Natural killer cell (primary cell): ENCODE measurements at regions of chr1 and their contacts with region 1.

Region 1: GRCh38 chr1:205284343-205285144 is 37.0 kb downstream of the NUAK2 start:
- DNase-seq: peak; percentile 81 to 94
- ATAC-seq: peak; percentile 63 to 77 (median 66)
- H3K4me3 ChIP-seq: peak overlapping the region; percentile 26
- H3K4me3 Mint-ChIP-seq: peak overlapping the region; percentile 91
- H3K27ac ChIP-seq: peak overlapping the region; percentile 82
- H3K27ac Mint-ChIP-seq: peak overlapping the region; percentile 83 to 99
- H3K4me1 ChIP-seq: peaks cover 83% of the 10 kb centered on the region
- H3K4me1 Mint-ChIP-seq: peaks cover 73 to 82% of the 10 kb centered on the region in 2 donors
- H3K27me3 ChIP-seq: no peaks in the 10 kb centered on the region
- H3K27me3 Mint-ChIP-seq: no peaks in the 10 kb centered on the region
- CTCF ChIP-seq: no peak

Region 2: GRCh38 chr1:203326830-203327683 is 1957.5 kb before region 1 on chr1:
- intact Hi-C with region 1: loop called (anchors 10 kb)
- DNase-seq: peak; percentile 96 to 97
- ATAC-seq: peak; percentile 74 to 91 (median 80)
- H3K4me3 ChIP-seq: peak overlapping the region; percentile 37
- H3K4me3 Mint-ChIP-seq: peak overlapping the region; percentile 82
- H3K27ac ChIP-seq: peak overlapping the region; percentile 95
- H3K27ac Mint-ChIP-seq: peak overlapping the region; percentile 94 to 99
- H3K4me1 ChIP-seq: peaks cover 64% of the 10 kb centered on the region
- H3K4me1 Mint-ChIP-seq: peaks cover 64 to 67% of the 10 kb centered on the region in 2 donors
- H3K27me3 ChIP-seq: no peaks in the 10 kb centered on the region
- H3K27me3 Mint-ChIP-seq: no peaks in the 10 kb centered on the region
- CTCF ChIP-seq: no peak

Region 3: DNA sequence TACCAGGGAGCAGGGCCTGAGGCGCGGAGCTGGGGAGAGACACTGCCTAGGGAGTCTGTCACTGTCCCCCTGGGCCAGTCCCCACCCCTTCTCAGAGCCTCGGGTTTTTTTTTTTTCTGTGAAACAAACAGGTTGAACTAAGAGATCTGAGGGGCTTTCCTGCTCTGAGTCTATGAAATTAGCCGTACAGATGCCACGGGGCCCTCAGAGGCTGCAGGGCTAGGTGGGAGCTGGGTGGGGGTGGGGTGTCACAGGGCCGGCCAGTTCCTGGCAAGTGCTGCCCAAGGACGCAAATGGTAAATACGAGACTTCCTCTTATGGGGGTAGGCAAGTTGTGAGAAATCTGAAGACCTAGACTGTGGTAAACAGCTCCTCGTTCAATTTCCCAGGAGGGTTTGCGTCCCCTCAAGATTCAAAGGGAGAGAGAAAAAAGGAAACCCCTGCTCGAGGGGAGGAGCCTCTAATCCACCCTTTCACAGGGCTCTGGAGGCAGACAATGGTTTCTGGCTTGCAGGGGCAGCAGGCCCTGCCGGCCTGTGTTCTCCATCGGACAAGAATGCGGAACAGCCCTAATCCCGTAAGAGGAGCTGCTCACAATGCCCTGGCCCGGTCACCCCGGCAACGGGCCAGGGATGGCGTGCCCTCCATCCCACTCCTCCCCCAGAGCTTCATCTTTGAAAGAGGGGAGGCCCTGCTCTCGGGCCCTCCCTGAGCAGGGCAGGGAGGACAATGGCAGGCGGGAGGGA is 29.2 kb after region 1 on chr1:
- intact Hi-C with region 1: loop called (anchors 1 kb)
- DNase-seq: peak; percentile 51 to 78
- ATAC-seq: peak; percentile 86 to 91 (median 89)
- H3K4me3 ChIP-seq: peak overlapping the region; percentile 22
- H3K4me3 Mint-ChIP-seq: peak overlapping the region; percentile 86
- H3K27ac ChIP-seq: peak overlapping the region; percentile 88
- H3K27ac Mint-ChIP-seq: peak overlapping the region; percentile 94 to 98
- H3K4me1 ChIP-seq: peaks cover 82% of the 10 kb centered on the region
- H3K4me1 Mint-ChIP-seq: peaks cover 76 to 82% of the 10 kb centered on the region in 2 donors
- H3K27me3 ChIP-seq: no peaks in the 10 kb centered on the region
- H3K27me3 Mint-ChIP-seq: no peaks in the 10 kb centered on the region
- CTCF ChIP-seq: no peak

Region 4: GRCh38 chr1:205466595-205467181 is 182.1 kb after region 1 on chr1:
- intact Hi-C with region 1: no loop called
- DNase-seq: no peak
- ATAC-seq: no peak
- H3K4me3 ChIP-seq: no peak overlapping the region
- H3K4me3 Mint-ChIP-seq: no peak overlapping the region
- H3K27ac ChIP-seq: no peak overlapping the region
- H3K27ac Mint-ChIP-seq: no peak overlapping the region
- H3K4me1 ChIP-seq: no peaks in the 10 kb centered on the region
- H3K4me1 Mint-ChIP-seq: no peaks in the 10 kb centered on the region
- H3K27me3 ChIP-seq: peaks cover 3% of the 10 kb centered on the region
- H3K27me3 Mint-ChIP-seq: peaks cover 14 to 17% of the 10 kb centered on the region in 2 donors
- CTCF ChIP-seq: no peak

Region 5: DNA sequence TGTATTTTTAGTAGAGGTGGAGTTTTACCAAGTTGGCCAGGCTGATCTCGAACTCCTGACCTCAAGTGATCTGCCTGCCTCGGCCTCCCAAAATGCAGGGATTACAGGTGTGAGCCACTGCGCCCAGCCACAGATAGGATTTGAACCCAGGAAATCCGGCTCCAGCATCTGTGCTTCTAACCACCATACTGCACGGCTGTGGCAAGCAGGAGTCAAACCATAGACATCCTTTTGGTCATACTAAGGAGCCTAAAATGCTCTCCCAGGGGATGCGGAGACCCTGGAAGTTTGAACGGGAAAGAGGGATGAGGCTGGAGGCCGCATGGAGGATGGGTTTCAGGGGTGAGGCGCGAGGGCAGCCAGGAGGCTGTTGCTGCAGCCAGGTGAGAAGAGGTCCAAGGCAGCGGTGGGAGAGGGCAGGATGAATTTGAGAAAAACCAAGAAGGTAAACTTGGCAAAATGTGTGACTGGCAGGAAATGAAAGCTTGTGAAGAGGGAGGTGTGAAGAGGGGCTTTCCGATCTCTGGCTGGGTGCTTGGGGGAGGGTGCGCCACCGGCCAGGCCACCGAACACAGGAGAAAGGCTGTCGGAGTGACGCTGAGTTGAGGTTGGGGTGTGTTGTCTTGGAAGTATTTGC is 195.9 kb after region 1 on chr1:
- intact Hi-C with region 1: loop called (anchors 2 kb)
- DNase-seq: peak; percentile 70 to 90
- ATAC-seq: peak; percentile 71 to 80 (median 78)
- H3K4me3 ChIP-seq: no peak overlapping the region
- H3K4me3 Mint-ChIP-seq: peak overlapping the region; percentile 85
- H3K27ac ChIP-seq: peak overlapping the region; percentile 81
- H3K27ac Mint-ChIP-seq: peak overlapping the region; percentile 83 to 95
- H3K4me1 ChIP-seq: peaks cover 81% of the 10 kb centered on the region
- H3K4me1 Mint-ChIP-seq: peaks cover 54 to 63% of the 10 kb centered on the region in 2 donors
- H3K27me3 ChIP-seq: no peaks in the 10 kb centered on the region
- H3K27me3 Mint-ChIP-seq: peaks cover 0 to 17% of the 10 kb centered on the region in 2 donors
- CTCF ChIP-seq: no peak

Region 6: GRCh38 chr1:206583707-206584648 is 1299.4 kb after region 1 on chr1:
- intact Hi-C with region 1: loop called (anchors 5 kb)
- DNase-seq: peak; percentile 84 to 94
- ATAC-seq: peak; percentile 24 to 59 (median 39)
- H3K4me3 ChIP-seq: no peak overlapping the region
- H3K4me3 Mint-ChIP-seq: peak overlapping the region; percentile 94
- H3K27ac ChIP-seq: peak overlapping the region; percentile 98
- H3K27ac Mint-ChIP-seq: peak overlapping the region; percentile 90 to 100
- H3K4me1 ChIP-seq: peaks cover 51% of the 10 kb centered on the region
- H3K4me1 Mint-ChIP-seq: peaks cover 62 to 66% of the 10 kb centered on the region in 2 donors
- H3K27me3 ChIP-seq: no peaks in the 10 kb centered on the region
- H3K27me3 Mint-ChIP-seq: no peaks in the 10 kb centered on the region
- CTCF ChIP-seq: peak; percentile 88